Activated naive CD4-positive, alpha-beta T cell treated with anti-CD3 and anti-CD28 coated beads for 36 hours (primary cell): ENCODE measurements at regions of chr3 and their contacts with region 1.

Region 1: GRCh38 chr3:157174649-157175498 is 14.9 kb upstream of the CCNL1 start:
- DNase-seq: peak; percentile 99
- H3K4me3 Mint-ChIP-seq: peak overlapping the region; percentile 85
- H3K27ac Mint-ChIP-seq: peak overlapping the region; percentile 95
- H3K4me1 Mint-ChIP-seq: peaks cover 25% of the 10 kb centered on the region
- H3K27me3 Mint-ChIP-seq: no peaks in the 10 kb centered on the region

Region 2: GRCh38 chr3:155854141-155854940 is 1320.5 kb before region 1 on chr3 and contains the start of gene SLC33A1:
- CTCF ChIA-PET with region 1: no interaction called
- intact Hi-C with region 1: loop called (anchors 1 kb)
- DNase-seq: peak; percentile 99
- H3K4me3 Mint-ChIP-seq: peak within 1 kb of the TSS; percentile 98
- H3K27ac Mint-ChIP-seq: peak within 1 kb of the TSS; percentile 99
- H3K4me1 Mint-ChIP-seq: peaks cover 28% of the 10 kb centered on the region
- H3K27me3 Mint-ChIP-seq: no peaks in the 10 kb centered on the region
- total RNA-seq, gene SLC33A1: 14.7 to 15.2 TPM

Region 3: GRCh38 chr3:156816800-156817645 is 357.9 kb before region 1 on chr3:
- CTCF ChIA-PET with region 1: no interaction called
- intact Hi-C with region 1: loop called (anchors 1 kb)
- DNase-seq: peak; percentile 90
- H3K4me3 Mint-ChIP-seq: peak overlapping the region; percentile 90
- H3K27ac Mint-ChIP-seq: peak overlapping the region; percentile 88
- H3K4me1 Mint-ChIP-seq: peaks cover 22% of the 10 kb centered on the region
- H3K27me3 Mint-ChIP-seq: no peaks in the 10 kb centered on the region

Region 4: DNA sequence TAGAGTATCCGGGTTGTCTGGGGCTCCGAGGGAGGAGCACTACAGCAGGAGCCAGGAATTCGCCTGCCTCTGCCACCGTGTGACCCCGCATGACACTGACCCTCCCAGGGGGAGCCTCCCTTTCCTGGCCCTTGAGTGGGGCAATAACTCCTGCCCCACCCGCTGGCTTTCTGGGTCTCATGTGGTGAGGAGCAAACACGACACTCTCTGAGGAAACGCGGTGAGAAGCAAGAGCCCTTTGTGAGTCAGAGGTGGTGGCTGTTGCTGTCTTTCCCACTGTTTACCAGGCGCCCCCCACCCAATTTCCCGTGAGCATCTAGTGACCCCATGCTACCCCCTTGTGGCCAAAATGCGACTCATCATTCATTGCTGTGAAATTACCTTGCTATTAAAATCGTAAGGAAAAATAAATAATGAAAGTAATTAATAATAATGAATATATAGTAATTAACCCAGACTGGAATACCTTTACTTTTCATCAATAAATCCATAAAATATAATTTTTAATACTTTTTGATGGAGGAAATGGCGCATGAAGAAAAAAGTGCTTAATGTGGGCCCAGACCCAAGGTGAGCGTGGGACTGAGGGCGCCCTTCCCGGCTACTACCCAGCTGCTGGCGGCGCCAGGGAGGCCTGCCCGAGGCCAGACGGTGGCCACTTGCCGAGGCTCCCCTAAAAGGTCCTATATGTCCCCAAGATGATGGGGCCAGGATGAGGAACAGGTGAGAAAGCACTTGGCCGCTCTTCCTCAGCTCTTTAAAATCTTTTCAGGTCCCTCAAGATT is 44.2 kb before region 1 on chr3:
- CTCF ChIA-PET with region 1: no interaction called
- intact Hi-C with region 1: loop called (anchors 1 kb)
- DNase-seq: peak; percentile 85
- H3K4me3 Mint-ChIP-seq: peak overlapping the region; percentile 61
- H3K27ac Mint-ChIP-seq: peak overlapping the region; percentile 98
- H3K4me1 Mint-ChIP-seq: peaks cover 48% of the 10 kb centered on the region
- H3K27me3 Mint-ChIP-seq: no peaks in the 10 kb centered on the region

Region 5: GRCh38 chr3:157226173-157226847 is 51.4 kb after region 1 on chr3:
- CTCF ChIA-PET with region 1: no interaction called
- intact Hi-C with region 1: loop called (anchors 1 kb)
- DNase-seq: no peak
- H3K4me3 Mint-ChIP-seq: no peak overlapping the region
- H3K27ac Mint-ChIP-seq: no peak overlapping the region
- H3K4me1 Mint-ChIP-seq: peaks cover 7% of the 10 kb centered on the region
- H3K27me3 Mint-ChIP-seq: no peaks in the 10 kb centered on the region

Region 6: DNA sequence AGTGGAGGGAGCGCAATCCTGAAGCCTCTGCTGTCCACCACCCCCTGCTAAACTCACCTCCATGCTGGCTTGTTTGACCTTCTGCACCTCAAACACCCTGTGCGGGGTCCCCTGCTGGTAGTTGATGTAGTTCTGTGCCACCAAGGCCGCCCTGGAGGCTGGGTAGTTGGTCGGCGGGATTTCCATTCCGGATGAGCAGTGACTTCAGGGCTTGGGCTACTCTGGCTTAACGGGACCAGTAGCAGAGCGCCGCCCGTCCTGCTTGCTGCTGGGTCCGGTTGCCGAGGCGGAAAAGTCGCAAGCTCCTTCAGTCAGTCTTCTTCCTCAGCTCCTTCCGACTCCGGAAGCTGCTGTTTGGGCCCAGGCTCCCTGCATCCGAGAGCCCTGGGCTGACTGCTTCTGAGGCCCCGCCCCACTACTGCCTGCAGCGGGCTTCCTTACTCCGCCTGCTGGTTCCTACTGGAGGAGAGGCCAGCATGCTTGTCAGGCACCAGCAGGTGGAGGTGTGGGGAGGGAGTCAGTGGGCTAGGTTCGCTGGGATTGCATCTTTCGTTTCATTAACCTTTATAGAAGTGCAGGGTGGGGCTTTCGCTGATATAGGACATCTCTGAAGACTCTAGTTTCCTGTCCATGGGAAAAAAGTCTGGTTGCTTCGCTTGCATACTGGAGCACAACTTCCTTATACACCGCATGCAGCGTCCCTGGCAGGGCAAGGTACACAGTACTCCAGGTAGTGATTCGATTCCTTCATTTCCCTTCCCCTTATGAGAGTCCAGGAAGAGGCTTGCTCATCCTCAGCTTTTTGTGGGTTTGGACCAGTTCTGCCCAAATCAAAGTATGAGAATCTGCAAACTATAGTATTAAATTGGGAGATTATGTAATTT is 1497.7 kb after region 1 on chr3 and contains the start of gene LXN:
- CTCF ChIA-PET with region 1: no interaction called
- intact Hi-C with region 1: loop called (anchors 10 kb)
- DNase-seq: peak; percentile 90
- H3K4me3 Mint-ChIP-seq: peak within 1 kb of the TSS; percentile 90
- H3K27ac Mint-ChIP-seq: peak within 1 kb of the TSS; percentile 88
- H3K4me1 Mint-ChIP-seq: peaks cover 17% of the 10 kb centered on the region
- H3K27me3 Mint-ChIP-seq: no peaks in the 10 kb centered on the region
- total RNA-seq, gene LXN: 3.7 to 4.0 TPM